BJ (cell line): ENCODE measurements at regions of chr14 and their contacts with region 1.

Region 1: GRCh38 chr14:78598041-78598920 is 428.1 kb downstream of the NRXN3 start:
- DNase-seq: no peak
- H3K4me3 ChIP-seq: no peak overlapping the region
- H3K27me3 ChIP-seq: peaks cover 1% of the 10 kb centered on the region; the same call in 1 of the 2 replicates
- CTCF ChIP-seq: peak; percentile 92

Region 2: DNA sequence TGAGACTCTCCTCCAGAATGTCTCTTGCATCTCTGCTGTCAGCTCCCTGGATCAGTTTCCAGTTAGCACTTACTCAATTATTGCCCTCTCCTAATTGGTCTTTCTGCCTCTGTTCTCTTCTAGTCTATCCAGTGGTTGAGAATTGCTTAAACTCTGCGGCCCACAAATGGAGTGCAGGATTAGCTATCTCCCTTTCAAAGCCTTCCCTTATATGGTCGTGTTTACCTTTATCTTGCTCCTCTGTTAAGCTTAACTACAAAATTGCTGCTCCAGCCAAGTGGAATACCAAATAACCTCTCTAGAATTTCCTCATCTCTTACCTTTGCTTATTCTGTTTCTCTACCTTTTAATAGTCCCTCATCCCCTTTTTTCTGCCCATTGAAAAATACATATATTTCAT is 295.4 kb before region 1 on chr14:
- CTCF ChIA-PET with region 1: no interaction called
- POLR2A ChIA-PET with region 1: no interaction called
- DNase-seq: no peak
- H3K4me3 ChIP-seq: no peak overlapping the region
- H3K27me3 ChIP-seq: no peaks in the 10 kb centered on the region
- CTCF ChIP-seq: no peak

Region 3: GRCh38 chr14:78530078-78530477 is 68.2 kb before region 1 on chr14:
- CTCF ChIA-PET with region 1: no interaction called
- POLR2A ChIA-PET with region 1: no interaction called
- DNase-seq: no peak
- H3K4me3 ChIP-seq: no peak overlapping the region
- H3K27me3 ChIP-seq: no peaks in the 10 kb centered on the region
- CTCF ChIP-seq: no peak

Region 4: GRCh38 chr14:78543433-78543832 is 54.8 kb before region 1 on chr14:
- CTCF ChIA-PET with region 1: no interaction called
- POLR2A ChIA-PET with region 1: no interaction called
- DNase-seq: no peak
- H3K4me3 ChIP-seq: no peak overlapping the region
- H3K27me3 ChIP-seq: no peaks in the 10 kb centered on the region
- CTCF ChIP-seq: no peak

Region 5: DNA sequence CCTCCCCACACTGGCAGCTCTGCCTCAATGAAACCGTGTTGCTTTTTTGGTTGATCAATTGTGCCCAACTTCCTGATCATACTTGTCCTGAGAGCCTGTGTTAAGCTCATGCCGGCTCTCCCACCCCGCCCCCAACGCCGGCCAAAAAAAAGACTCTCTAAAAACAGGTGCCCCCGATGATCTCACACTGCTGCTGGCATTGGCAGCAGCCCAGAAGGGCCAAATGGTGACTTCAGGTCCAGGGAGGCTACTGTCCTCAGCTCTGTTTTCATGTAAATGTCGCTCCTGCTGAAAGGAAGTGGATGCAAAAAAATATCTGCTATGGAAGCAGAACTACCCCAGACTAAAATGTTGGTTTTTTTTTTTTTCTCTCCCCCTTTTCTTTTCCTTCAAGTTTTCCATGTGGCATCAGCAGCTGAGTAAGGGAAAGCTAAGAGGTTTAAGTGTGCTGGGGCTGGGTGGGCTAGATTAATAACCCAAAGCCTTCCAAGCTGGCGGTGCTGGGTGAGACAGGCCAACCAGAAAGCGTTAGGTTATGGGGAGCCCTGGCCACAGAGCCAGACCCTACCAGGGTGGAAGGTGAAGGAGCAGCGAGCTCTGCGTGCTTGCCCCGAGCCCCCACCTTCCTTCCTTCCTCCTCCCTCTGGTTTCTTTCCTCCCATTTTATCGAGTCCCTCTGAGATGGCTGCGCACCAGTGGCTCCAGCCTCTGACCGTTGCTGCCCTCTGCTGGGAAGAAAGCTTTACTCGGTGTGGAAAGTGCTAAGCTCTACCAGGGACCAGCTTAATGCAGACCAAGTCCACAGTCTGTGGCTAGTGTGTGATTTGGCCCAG is 32.0 kb before region 1 on chr14:
- CTCF ChIA-PET with region 1: interaction called, 21 read pairs
- POLR2A ChIA-PET with region 1: no interaction called
- DNase-seq: peak; percentile 9
- H3K4me3 ChIP-seq: peak overlapping the region; percentile 29; the same call in 1 of the 2 replicates
- H3K27me3 ChIP-seq: no peaks in the 10 kb centered on the region
- CTCF ChIP-seq: peak; percentile 88

Region 6: DNA sequence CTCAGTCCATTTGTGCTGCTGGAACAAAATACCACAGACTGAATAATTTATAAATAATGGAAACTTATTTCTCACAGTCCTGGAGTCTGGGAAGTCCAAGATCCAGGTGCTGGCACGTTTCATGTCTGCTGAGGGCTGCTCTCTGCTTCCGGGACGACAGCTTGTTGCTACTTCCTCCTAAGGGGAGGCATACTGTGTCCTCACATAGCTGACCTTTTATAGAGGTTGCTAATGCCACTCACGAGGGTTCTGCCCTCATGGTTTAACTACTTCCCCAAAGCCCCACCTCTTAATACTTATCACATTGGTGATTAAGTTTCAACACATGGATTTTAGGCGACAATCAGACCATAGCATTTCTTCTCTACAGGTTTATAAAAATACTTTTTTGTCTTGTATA is 17.1 kb before region 1 on chr14:
- CTCF ChIA-PET with region 1: interaction called, 35 read pairs
- POLR2A ChIA-PET with region 1: no interaction called
- DNase-seq: no peak
- H3K4me3 ChIP-seq: no peak overlapping the region
- H3K27me3 ChIP-seq: no peaks in the 10 kb centered on the region
- CTCF ChIP-seq: no peak

Region 7: DNA sequence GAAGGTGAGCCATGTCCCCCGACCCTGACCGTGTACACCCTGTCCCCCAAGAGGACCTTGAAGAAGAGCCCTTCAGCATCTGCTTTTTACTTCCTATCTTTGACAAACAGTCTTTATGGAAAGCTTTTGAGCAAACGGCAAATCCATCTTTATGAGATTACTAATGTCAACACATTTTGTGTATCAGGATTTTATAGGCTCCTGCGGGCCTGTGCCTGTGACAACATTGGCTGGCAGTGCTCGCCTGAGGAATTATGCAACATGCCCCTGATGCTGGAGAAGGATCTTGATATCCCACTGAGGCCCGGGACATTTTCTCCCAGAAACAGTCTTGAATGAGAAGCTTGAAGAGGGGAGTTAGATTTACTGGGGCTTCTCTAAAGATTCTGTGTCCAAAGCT is 11.6 kb before region 1 on chr14:
- CTCF ChIA-PET with region 1: interaction called, 35 read pairs
- POLR2A ChIA-PET with region 1: no interaction called
- DNase-seq: no peak
- H3K4me3 ChIP-seq: no peak overlapping the region
- H3K27me3 ChIP-seq: no peaks in the 10 kb centered on the region
- CTCF ChIP-seq: no peak